Ascending aorta (tissue), 2 donors: ENCODE measurements at regions of chr10 and their contacts with region 1.

Region 1: GRCh38 chr10:51001587-51001986 is 72.7 kb upstream of the PRKG1 start:
- DNase-seq: no peak
- H3K4me3 ChIP-seq: peak overlapping the region in 1 of 2 donors; percentile 11
- H3K27ac ChIP-seq: peak overlapping the region; percentile 74 to 85
- H3K4me1 ChIP-seq: peaks cover 0 to 42% of the 10 kb centered on the region in 2 donors
- H3K27me3 ChIP-seq: no peaks in the 10 kb centered on the region
- CTCF ChIP-seq: peak; percentile 60 to 71 (median 65)

Region 2: GRCh38 chr10:50968386-50969091 is 33.0 kb before region 1 on chr10:
- intact Hi-C with region 1: no loop called
- DNase-seq: no peak
- H3K4me3 ChIP-seq: no peak overlapping the region
- H3K27ac ChIP-seq: no peak overlapping the region
- H3K4me1 ChIP-seq: no peaks in the 10 kb centered on the region
- H3K27me3 ChIP-seq: no peaks in the 10 kb centered on the region
- CTCF ChIP-seq: no peak

Region 3: DNA sequence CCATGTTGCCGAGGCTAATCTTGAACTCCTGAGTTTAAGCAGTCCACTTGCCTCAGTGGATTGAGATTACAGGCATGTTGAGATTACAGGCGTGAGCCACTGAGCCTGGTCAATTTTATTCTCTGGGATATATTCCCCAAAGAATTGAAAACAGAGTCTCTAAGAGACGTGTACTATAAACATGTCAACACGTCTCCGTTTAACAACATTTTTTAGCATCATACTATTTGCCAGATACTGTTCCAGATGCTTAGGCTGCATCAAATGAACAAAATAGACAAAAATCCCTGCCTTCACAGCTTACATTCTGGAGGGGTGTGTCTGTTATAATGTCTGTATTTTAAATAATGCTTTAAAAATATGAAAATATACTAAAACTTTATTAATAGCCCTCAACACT is 18.6 kb after region 1 on chr10:
- intact Hi-C with region 1: no loop called
- DNase-seq: no peak
- H3K4me3 ChIP-seq: no peak overlapping the region
- H3K27ac ChIP-seq: peak overlapping the region; percentile 77 to 91
- H3K4me1 ChIP-seq: peaks cover 8 to 54% of the 10 kb centered on the region in 2 donors
- H3K27me3 ChIP-seq: no peaks in the 10 kb centered on the region
- CTCF ChIP-seq: no peak

Region 4: GRCh38 chr10:51389415-51390321 is 388.1 kb after region 1 on chr10:
- intact Hi-C with region 1: loop called (anchors 10 kb)
- DNase-seq: no peak
- H3K4me3 ChIP-seq: no peak overlapping the region
- H3K27ac ChIP-seq: peak overlapping the region in 1 of 2 donors; percentile 11
- H3K4me1 ChIP-seq: peaks cover 0 to 23% of the 10 kb centered on the region in 2 donors
- H3K27me3 ChIP-seq: no peaks in the 10 kb centered on the region
- CTCF ChIP-seq: peak in 2 of 3 experiments; percentile 26 to 38

Region 5: GRCh38 chr10:51422311-51423120 is 420.9 kb after region 1 on chr10:
- intact Hi-C with region 1: loop called (anchors 5 kb)
- DNase-seq: peak in 1 of 2 donors; percentile 79
- H3K4me3 ChIP-seq: peak overlapping the region; percentile 14 to 17
- H3K27ac ChIP-seq: peak overlapping the region; percentile 76 to 78
- H3K4me1 ChIP-seq: peaks cover 0 to 38% of the 10 kb centered on the region in 2 donors
- H3K27me3 ChIP-seq: no peaks in the 10 kb centered on the region
- CTCF ChIP-seq: peak; percentile 57 to 82 (median 75)

Region 6: GRCh38 chr10:51706225-51706624 is 704.6 kb after region 1 on chr10:
- intact Hi-C with region 1: loop called (anchors 5 kb)
- DNase-seq: peak; percentile 75 to 97
- H3K4me3 ChIP-seq: no peak overlapping the region
- H3K27ac ChIP-seq: peak overlapping the region; percentile 88 to 92
- H3K4me1 ChIP-seq: peaks cover 4 to 47% of the 10 kb centered on the region in 2 donors
- H3K27me3 ChIP-seq: no peaks in the 10 kb centered on the region
- CTCF ChIP-seq: no peak

Region 7: GRCh38 chr10:52215745-52216361 is 1214.3 kb after region 1 on chr10:
- intact Hi-C with region 1: loop called (anchors 5 kb)
- DNase-seq: no peak
- H3K4me3 ChIP-seq: no peak overlapping the region
- H3K27ac ChIP-seq: peak overlapping the region in 1 of 2 donors; percentile 63
- H3K4me1 ChIP-seq: peaks cover 4 to 22% of the 10 kb centered on the region in 2 donors
- H3K27me3 ChIP-seq: no peaks in the 10 kb centered on the region
- CTCF ChIP-seq: peak; percentile 66 to 68 (median 67)